HEK293 (cell line): ENCODE measurements at regions of chr17 and their contacts with region 1.

Region 1: DNA sequence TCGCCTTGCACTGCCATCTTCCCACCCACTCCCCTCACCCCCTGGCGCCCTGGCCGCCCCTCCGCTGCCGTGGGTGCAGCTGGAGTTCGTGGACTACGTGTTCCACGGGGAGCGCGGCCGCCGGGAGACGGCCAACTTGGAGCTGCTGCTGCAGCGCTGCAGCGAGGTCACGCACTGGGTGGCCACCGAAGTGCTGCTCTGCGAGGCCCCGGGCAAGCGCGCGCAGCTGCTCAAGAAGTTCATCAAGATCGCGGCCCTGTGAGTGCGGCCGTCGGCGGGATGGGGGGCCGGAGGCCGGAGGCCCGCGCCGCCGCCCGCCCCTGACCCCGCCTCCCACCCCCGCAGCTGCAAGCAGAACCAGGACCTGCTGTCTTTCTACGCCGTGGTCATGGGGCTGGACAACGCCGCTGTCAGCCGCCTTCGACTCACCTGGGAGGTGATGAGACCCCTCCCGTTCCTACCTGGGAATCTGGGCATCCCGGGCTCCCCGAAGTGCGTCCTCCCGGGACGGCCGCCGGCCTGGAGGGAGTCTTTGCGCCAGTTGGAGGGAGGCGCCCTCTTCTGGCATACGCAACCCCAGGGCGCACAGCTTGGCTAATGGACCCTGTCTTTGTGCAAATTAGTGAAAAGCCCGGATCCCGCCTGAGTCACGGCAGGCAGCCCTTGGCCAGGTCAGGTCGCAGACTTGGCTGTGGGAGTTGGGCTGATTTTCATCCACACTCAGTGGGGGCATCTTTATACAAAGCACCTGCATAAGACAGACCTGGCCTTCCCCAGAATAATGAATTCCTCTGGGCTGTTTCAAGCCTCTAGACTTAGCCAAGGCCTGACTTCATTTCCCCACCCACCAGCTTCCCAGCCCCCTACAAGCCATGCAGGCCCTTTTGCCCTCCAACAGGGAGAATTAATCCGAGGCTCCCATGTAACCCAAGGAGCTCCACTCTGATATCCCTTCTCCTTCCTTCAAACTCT is 14.3 kb downstream of the RAPGEFL1 start:
- H3K4me3 ChIP-seq: peak overlapping the region; percentile 50
- H3K27ac ChIP-seq: no peak overlapping the region
- H3K4me1 ChIP-seq: peaks cover 6% of the 10 kb centered on the region
- CTCF ChIP-seq: peak; percentile 90

Region 2: GRCh38 chr17:40177275-40177874 is 14.1 kb before region 1 on chr17 and contains the start of gene RAPGEFL1:
- CTCF ChIA-PET with region 1: interaction called, 32 read pairs
- POLR2A ChIA-PET with region 1: interaction called, 8 read pairs
- H3K4me3 ChIP-seq: peak within 1 kb of the TSS; percentile 12; the same call in 1 of the 2 replicates
- H3K27ac ChIP-seq: no peak within 1 kb of the TSS
- H3K4me1 ChIP-seq: peaks cover 9% of the 10 kb centered on the region
- CTCF ChIP-seq: no peak

Region 3: DNA sequence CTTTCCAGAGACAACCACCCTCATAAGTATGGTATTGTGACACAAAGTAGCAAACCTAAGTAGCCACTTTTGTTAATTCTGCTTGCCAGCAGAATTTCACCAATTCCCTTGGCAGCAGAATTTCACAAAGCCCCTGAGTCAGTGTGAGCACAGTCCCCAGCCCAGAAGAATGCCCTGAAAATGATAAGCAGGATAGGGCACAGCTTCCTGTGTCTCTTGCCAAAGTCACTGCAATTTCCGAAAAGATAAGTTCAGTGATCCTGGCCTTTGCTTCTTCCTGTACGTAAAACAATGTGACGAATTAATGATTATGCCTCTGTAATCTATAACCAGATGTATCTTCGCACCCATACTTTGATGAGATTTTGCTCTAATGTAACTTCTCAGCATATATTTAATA is 11.6 kb after region 1 on chr17:
- CTCF ChIA-PET with region 1: interaction called, 66 read pairs
- POLR2A ChIA-PET with region 1: no interaction called
- H3K4me3 ChIP-seq: no peak overlapping the region
- H3K27ac ChIP-seq: no peak overlapping the region
- H3K4me1 ChIP-seq: no peaks in the 10 kb centered on the region
- CTCF ChIP-seq: no peak

Region 4: GRCh38 chr17:40209404-40210093 is 18.0 kb after region 1 on chr17:
- CTCF ChIA-PET with region 1: interaction called, 13 read pairs
- POLR2A ChIA-PET with region 1: no interaction called
- H3K4me3 ChIP-seq: no peak overlapping the region
- H3K27ac ChIP-seq: no peak overlapping the region
- H3K4me1 ChIP-seq: no peaks in the 10 kb centered on the region
- CTCF ChIP-seq: no peak

Region 5: DNA sequence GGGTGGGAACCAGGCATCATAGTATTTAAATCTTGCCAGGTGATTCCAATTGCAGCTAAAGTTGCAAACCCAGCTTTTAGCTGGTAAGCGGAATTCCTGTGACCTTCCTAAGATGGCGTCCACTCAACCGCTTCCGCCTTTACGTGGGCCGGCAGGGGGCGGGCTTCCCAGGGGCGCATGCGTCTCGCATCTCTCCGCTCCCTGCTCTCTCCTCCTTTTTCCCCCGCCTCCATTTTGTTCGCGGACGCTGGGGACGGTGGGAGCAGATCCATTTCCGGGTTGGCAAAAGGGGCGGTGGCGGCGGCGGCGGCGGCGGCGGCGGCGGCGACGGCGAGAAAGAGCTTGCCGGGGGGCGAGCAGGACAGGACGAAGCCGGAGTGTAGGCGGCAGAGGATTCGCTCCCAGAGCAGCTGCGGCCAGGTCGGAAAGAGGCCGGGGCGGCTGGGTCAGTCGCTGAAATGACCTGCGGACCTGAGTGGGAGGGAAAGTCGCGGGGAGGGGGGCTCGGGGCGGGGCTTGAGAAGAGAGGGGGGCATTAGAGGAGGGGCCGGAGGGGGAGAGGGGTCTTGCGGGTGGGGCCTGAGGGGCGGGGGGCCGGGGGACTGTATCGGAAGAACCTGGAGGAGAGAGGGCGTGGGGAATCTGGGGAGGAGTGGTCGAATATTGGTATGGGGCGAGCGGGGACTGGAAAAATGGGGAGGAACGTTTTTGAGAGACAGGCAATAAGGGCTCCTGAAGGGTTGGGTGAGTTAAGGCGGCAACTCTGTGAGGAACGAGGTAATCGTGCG is 27.7 kb after region 1 on chr17 and contains the start of gene WIPF2:
- CTCF ChIA-PET with region 1: interaction called, 7 read pairs
- POLR2A ChIA-PET with region 1: interaction called, 11 read pairs
- H3K4me3 ChIP-seq: peak within 1 kb of the TSS; percentile 80
- H3K27ac ChIP-seq: peak within 1 kb of the TSS; percentile 92
- H3K4me1 ChIP-seq: peaks cover 3% of the 10 kb centered on the region
- CTCF ChIP-seq: peak; percentile 96

Region 6: GRCh38 chr17:40287494-40288369 is 96.2 kb after region 1 on chr17 and contains the start of gene CDC6:
- CTCF ChIA-PET with region 1: interaction called, 32 read pairs
- POLR2A ChIA-PET with region 1: interaction called, 6 read pairs
- H3K4me3 ChIP-seq: peak within 1 kb of the TSS; percentile 96
- H3K27ac ChIP-seq: peak within 1 kb of the TSS; percentile 95
- H3K4me1 ChIP-seq: peaks cover 3% of the 10 kb centered on the region
- CTCF ChIP-seq: 0 out of 2 replicates have a peak, but pooled peaks have one; percentile 9

Region 7: DNA sequence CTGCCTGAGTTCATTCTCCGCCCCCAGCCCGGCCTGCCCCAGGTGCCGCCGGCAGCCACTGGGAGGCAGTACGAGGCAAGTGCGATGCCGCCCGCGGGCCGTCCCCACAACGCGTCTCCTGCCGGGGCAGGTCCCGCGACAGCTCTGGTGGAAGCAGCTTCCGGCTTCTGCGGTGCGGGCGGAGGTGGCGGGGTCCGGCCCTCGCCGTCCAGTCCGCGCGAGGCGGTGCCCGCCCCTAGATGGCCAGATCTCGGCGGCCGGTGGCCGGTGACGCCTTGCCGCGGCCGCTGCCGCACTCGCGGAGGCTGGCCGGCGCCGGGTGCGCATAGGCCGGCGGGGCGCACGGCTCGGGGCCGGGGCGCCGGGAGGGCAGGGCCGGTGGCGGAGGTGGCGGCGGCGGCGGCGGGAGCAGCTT is 171.2 kb after region 1 on chr17:
- CTCF ChIA-PET with region 1: no interaction called
- POLR2A ChIA-PET with region 1: no interaction called
- H3K4me3 ChIP-seq: peak overlapping the region; percentile 50
- H3K27ac ChIP-seq: peak overlapping the region; percentile 70; the same call in 1 of the 2 replicates
- H3K4me1 ChIP-seq: no peaks in the 10 kb centered on the region
- CTCF ChIP-seq: peak; percentile 97

Region 8: GRCh38 chr17:40378966-40379365 is 187.4 kb after region 1 on chr17:
- CTCF ChIA-PET with region 1: no interaction called
- POLR2A ChIA-PET with region 1: no interaction called
- H3K4me3 ChIP-seq: no peak overlapping the region
- H3K27ac ChIP-seq: no peak overlapping the region
- H3K4me1 ChIP-seq: no peaks in the 10 kb centered on the region
- CTCF ChIP-seq: no peak